IMR-90 (cell line): ENCODE measurements at regions of chr18 and their contacts with region 1.

Region 1: GRCh38 chr18:23994361-23994902 is 20.1 kb upstream of the TTC39C start:
- DNase-seq: peak; percentile 96
- ATAC-seq: peak; percentile 95
- H3K4me3 ChIP-seq: no peak overlapping the region; the same call in 1 of the 2 replicates
- H3K27ac ChIP-seq: peak overlapping the region; percentile 10; the same call in 1 of the 2 replicates
- H3K4me1 ChIP-seq: peaks cover 10% of the 10 kb centered on the region
- H3K27me3 ChIP-seq: no peaks in the 10 kb centered on the region
- CTCF ChIP-seq: no peak
- POLR2A ChIP-seq: no peak
- RAD21 ChIP-seq: no peak

Region 2: DNA sequence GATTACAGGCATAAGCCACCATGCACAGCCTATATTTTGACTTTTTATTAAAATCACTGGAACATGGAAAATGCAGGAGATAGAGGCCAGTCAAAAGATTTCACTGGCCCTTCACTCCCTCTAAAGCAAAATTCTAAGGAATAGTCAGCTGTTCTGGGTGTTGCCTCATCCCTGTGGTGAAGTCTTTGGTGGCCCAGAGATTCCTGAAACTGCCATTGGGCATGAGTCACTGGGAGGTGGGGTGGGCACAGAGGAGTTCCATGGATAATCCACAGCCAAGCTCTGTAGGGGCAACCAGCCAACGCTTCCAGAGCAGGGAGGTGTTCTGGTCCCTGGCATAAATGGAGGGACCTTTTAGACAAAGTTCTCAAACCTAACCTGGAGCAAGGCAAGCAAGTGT is 69.6 kb before region 1 on chr18:
- CTCF ChIA-PET with region 1: no interaction called
- POLR2A ChIA-PET with region 1: no interaction called
- dilution Hi-C with region 1: no loop called
- in situ Hi-C with region 1: no loop called
- intact Hi-C with region 1: loop called (anchors 5 kb)
- DNase-seq: peak; percentile 50
- ATAC-seq: peak; percentile 55
- H3K4me3 ChIP-seq: no peak overlapping the region
- H3K27ac ChIP-seq: no peak overlapping the region
- H3K4me1 ChIP-seq: peaks cover 7% of the 10 kb centered on the region
- H3K27me3 ChIP-seq: no peaks in the 10 kb centered on the region
- CTCF ChIP-seq: no peak
- POLR2A ChIP-seq: no peak
- RAD21 ChIP-seq: no peak

Region 3: GRCh38 chr18:23943903-23944624 is 50.4 kb before region 1 on chr18:
- CTCF ChIA-PET with region 1: no interaction called
- POLR2A ChIA-PET with region 1: no interaction called
- dilution Hi-C with region 1: no loop called
- in situ Hi-C with region 1: no loop called
- intact Hi-C with region 1: loop called (anchors 1 kb)
- DNase-seq: peak; percentile 90
- ATAC-seq: peak; percentile 86
- H3K4me3 ChIP-seq: no peak overlapping the region
- H3K27ac ChIP-seq: peak overlapping the region; percentile 95
- H3K4me1 ChIP-seq: peaks cover 12% of the 10 kb centered on the region
- H3K27me3 ChIP-seq: no peaks in the 10 kb centered on the region
- CTCF ChIP-seq: no peak
- POLR2A ChIP-seq: no peak
- RAD21 ChIP-seq: no peak

Region 4: DNA sequence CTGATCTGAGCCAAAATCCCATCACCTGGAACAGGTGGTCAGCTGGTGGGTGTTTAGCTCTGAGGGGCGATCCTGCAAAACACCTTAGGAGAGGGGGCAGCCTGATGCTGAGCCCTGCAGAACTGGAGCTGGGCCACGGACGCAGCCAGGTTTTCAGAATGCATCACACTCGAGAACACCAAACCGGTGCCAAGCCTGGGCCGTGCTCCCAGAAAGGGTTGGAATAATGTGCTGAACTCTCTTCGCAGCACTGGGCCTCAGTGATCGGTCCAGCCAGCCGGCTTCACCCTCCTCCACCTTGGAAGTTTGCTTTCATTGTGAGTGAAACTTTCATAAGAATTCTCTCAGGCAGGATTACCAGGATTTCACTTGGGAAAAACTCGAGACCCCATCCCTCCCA is 36.4 kb before region 1 on chr18:
- CTCF ChIA-PET with region 1: no interaction called
- POLR2A ChIA-PET with region 1: no interaction called
- dilution Hi-C with region 1: no loop called
- in situ Hi-C with region 1: no loop called
- intact Hi-C with region 1: no loop called
- DNase-seq: no peak
- ATAC-seq: peak; percentile 27; the same call in 1 of the 2 replicates
- H3K4me3 ChIP-seq: no peak overlapping the region
- H3K27ac ChIP-seq: no peak overlapping the region
- H3K4me1 ChIP-seq: no peaks in the 10 kb centered on the region
- H3K27me3 ChIP-seq: peaks cover 4% of the 10 kb centered on the region; the same call in 1 of the 2 replicates
- CTCF ChIP-seq: no peak
- POLR2A ChIP-seq: no peak
- RAD21 ChIP-seq: no peak